Esophagus muscularis mucosa (tissue), 4 donors: ENCODE measurements at regions of chr12 and their contacts with region 1.

Region 1: GRCh38 chr12:38316391-38317129 is at the start of gene ALG10B:
- DNase-seq: peak; percentile 98
- H3K4me3 ChIP-seq: peak within 1 kb of the TSS; percentile 60 to 83 (median 74)
- H3K27ac ChIP-seq: peak within 1 kb of the TSS; percentile 84 to 87 (median 86)
- H3K4me1 ChIP-seq: peaks cover 8 to 31% (median 21%) of the 10 kb centered on the region in 4 donors
- H3K27me3 ChIP-seq: no peaks in the 10 kb centered on the region
- CTCF ChIP-seq: peak; percentile 44 to 83 (median 77)
- EP300 ChIP-seq: no peak
- POLR2A ChIP-seq: no peak
- total RNA-seq, gene ALG10B: 2.3 to 7.4 (median 4.9) TPM

Region 2: GRCh38 chr12:38132139-38132538 is 184.4 kb before region 1 on chr12:
- intact Hi-C with region 1: loop called (anchors 2 kb)
- DNase-seq: no peak
- H3K4me3 ChIP-seq: no peak overlapping the region
- H3K27ac ChIP-seq: no peak overlapping the region
- H3K4me1 ChIP-seq: no peaks in the 10 kb centered on the region
- H3K27me3 ChIP-seq: peaks cover 0 to 9% (median 0%) of the 10 kb centered on the region in 4 donors
- CTCF ChIP-seq: no peak
- EP300 ChIP-seq: no peak
- POLR2A ChIP-seq: no peak

Region 3: DNA sequence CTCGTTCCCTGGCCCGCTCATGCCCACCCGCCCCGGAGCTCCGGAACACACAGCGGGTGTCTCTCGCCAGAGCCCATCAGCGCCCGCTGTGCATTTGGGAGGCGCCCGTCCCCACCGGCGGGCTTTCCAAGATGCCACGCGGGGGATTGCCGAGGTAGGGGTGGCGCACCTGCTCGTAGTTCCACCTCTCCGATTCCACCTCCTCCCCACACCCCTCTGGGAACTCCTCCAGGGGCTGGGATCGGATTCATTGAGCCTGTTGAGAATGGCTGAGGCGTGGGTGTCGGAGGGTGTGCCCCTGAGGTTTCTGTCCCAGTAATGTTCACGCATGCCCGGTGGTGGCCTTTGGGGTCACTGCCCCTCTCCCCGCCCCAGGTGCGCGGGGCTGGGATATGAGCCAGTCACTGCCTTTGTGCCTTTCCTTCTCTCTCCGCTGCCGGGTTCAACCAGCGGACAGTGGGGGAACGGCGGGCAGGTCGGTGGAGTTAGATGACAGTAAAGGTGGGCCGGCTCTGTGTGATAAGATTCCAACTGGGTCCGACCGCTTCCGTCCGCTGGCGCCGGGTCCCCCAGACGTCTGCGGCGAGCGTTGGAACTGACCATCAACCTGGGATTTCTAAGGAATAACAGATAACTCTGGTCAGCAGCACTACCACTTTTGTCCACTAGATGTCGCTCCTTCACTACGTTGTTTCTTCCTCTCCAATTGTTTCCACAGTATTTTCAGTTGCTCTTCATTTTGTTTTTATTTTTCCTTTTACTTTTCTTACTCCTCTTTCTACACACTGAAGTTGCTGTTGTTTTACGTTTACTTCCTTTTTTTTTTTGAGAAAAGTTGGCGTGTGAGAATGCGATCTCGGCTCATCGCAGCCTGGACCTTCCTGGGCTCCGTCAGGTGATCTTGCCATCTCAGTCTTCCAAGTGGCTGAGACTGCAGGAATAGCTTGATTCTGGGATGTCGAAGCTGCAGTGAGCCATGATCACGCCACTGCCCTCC is 178.0 kb before region 1 on chr12:
- intact Hi-C with region 1: loop called (anchors 1 kb)
- DNase-seq: no peak
- H3K4me3 ChIP-seq: peak overlapping the region; percentile 38 to 48 (median 44)
- H3K27ac ChIP-seq: no peak overlapping the region
- H3K4me1 ChIP-seq: peaks cover 0 to 12% (median 9%) of the 10 kb centered on the region in 4 donors
- H3K27me3 ChIP-seq: peaks cover 0 to 18% (median 5%) of the 10 kb centered on the region in 4 donors
- CTCF ChIP-seq: peak; percentile 90 to 98 (median 98)
- EP300 ChIP-seq: no peak
- POLR2A ChIP-seq: no peak

Region 4: DNA sequence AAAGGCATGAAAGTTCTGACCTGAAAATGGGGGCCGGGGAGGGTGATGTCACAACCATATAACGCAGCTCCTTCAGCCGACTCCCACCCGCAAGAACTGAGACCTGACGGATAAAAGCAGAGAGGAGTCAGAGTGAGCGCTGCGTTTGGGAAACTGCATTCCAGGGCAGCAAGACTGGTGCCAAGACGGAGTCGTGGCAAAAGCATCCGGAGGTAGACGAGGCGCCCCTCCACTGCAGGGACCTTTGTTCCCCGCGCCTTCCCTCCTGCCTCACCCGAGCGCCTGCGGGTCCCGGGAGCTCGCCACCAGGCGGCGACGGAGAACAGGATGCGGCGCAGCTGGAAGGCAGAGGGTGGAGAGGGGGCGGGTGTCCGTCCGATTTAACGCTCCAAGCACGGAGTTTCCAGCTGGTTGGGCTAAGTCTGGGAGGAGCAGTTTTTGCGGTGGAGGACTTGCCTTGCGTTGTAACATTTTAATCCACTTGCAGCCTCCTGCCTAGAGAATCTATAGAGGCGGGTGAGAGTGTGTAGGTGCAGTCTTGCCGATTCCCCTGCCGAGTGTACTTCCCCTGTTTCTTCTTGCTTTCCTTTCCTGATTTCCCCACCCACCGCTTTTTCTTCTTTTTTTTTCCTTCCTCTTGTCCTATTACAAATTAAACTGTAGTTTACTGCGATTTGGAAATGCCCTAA is 590.1 kb after region 1 on chr12:
- intact Hi-C with region 1: loop called (anchors 5 kb)
- DNase-seq: peak; percentile 94
- H3K4me3 ChIP-seq: peak overlapping the region; percentile 73 to 86 (median 80)
- H3K27ac ChIP-seq: peak overlapping the region; percentile 90 to 98 (median 92)
- H3K4me1 ChIP-seq: peaks cover 4 to 38% (median 27%) of the 10 kb centered on the region in 4 donors
- H3K27me3 ChIP-seq: no peaks in the 10 kb centered on the region
- CTCF ChIP-seq: peak; percentile 78 to 96 (median 85)
- EP300 ChIP-seq: no peak
- POLR2A ChIP-seq: no peak